ENCODE measurements at regions of chr2 and their contacts with region 1.

Region 1: DNA sequence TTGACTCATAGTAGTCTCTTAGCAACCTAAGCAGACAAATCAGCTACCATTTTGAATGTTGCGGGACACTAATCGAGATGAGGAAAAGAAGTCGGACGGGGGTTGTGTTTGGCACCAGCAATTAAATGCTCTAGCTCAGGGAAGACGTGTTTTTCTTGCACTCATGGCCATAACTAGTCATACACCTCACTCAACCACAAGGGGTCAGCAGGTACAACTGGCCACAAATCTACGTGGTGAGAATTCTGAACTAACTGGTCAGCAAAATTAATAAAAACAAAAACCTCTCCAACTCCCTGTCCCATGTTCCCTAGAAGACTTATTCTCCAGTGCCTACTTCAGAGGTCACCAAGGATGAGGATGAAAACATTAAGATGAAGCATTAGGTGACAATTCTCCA is 1467.8 kb downstream of the DPP10 start:
- DNase-seq: no peak
- ATAC-seq: no peak
- H3K4me3 ChIP-seq: no peak overlapping the region
- H3K4me1 ChIP-seq: no peaks in the 10 kb centered on the region
- CTCF ChIP-seq: no peak

Region 2: DNA sequence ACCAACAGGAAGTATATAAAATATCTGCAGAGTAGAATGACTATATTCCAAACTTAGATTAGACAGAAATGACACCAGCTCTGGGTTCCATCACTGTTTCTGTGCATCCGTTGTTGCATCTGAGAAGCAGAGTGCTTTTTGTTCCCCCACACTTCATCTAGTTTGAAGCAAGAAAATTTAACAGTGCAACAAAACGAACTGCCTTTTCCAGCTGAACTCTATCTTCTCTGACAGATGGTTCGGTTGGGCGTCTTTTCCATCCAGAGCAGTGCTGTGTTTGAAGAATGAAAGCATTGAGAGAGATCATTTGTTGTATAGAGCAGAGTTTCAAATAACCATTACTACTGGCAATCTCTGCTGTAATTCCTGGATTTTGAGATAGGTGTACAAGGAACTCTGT is 710.3 kb before region 1 on chr2:
- intact Hi-C with region 1: no loop called
- DNase-seq: no peak
- ATAC-seq: no peak
- H3K4me3 ChIP-seq: no peak overlapping the region
- H3K4me1 ChIP-seq: no peaks in the 10 kb centered on the region
- CTCF ChIP-seq: no peak

Region 3: GRCh38 chr2:115757286-115757685 is 153.0 kb before region 1 on chr2:
- intact Hi-C with region 1: no loop called
- DNase-seq: no peak
- ATAC-seq: no peak
- H3K4me3 ChIP-seq: no peak overlapping the region
- H3K4me1 ChIP-seq: no peaks in the 10 kb centered on the region
- CTCF ChIP-seq: no peak

Region 4: GRCh38 chr2:116023026-116023425 is 112.8 kb after region 1 on chr2:
- intact Hi-C with region 1: loop called in 1 of 2 experiments (anchors 10 kb)
- DNase-seq: no peak
- ATAC-seq: no peak
- H3K4me3 ChIP-seq: no peak overlapping the region
- H3K4me1 ChIP-seq: no peaks in the 10 kb centered on the region
- CTCF ChIP-seq: no peak